ENCODE measurements at regions of chr3 and their contacts with region 1.

Region 1: GRCh38 chr3:138915503-138916498 is 31.1 kb downstream of the FOXL2 start:
- DNase-seq: peak; percentile 50 to 89 (median 83)
- ATAC-seq: peak; percentile 89
- H3K4me3 ChIP-seq: peak overlapping the region; percentile 74 to 99
- H3K4me3 Mint-ChIP-seq: peak overlapping the region; percentile 85
- H3K27ac ChIP-seq: peak overlapping the region; percentile 15 to 50
- H3K27ac Mint-ChIP-seq: peak overlapping the region; percentile 52
- H3K4me1 ChIP-seq: no peaks in the 10 kb centered on the region
- H3K4me1 Mint-ChIP-seq: peaks cover 5% of the 10 kb centered on the region
- H3K27me3 ChIP-seq: no peaks in the 10 kb centered on the region
- H3K27me3 Mint-ChIP-seq: peaks cover 7% of the 10 kb centered on the region
- CTCF ChIP-seq: peak; percentile 89

Region 2: GRCh38 chr3:138068579-138069174 is 847.1 kb before region 1 on chr3:
- CTCF ChIA-PET with region 1: no interaction called
- POLR2A ChIA-PET with region 1: no interaction called
- intact Hi-C with region 1: loop called in 1 of 2 experiments (anchors 2 kb)
- DNase-seq: peak; percentile 53 to 80 (median 68)
- ATAC-seq: peak; percentile 79
- H3K4me3 ChIP-seq: no peak overlapping the region
- H3K4me3 Mint-ChIP-seq: no peak overlapping the region
- H3K27ac ChIP-seq: no peak overlapping the region
- H3K27ac Mint-ChIP-seq: no peak overlapping the region
- H3K4me1 ChIP-seq: no peaks in the 10 kb centered on the region
- H3K4me1 Mint-ChIP-seq: no peaks in the 10 kb centered on the region
- H3K27me3 ChIP-seq: no peaks in the 10 kb centered on the region
- H3K27me3 Mint-ChIP-seq: peaks cover 9% of the 10 kb centered on the region
- CTCF ChIP-seq: peak; percentile 79

Region 3: GRCh38 chr3:138479438-138479863 is 436.4 kb before region 1 on chr3:
- CTCF ChIA-PET with region 1: interaction called, 3 read pairs
- POLR2A ChIA-PET with region 1: no interaction called
- intact Hi-C with region 1: loop called (anchors 2 to 5 kb)
- DNase-seq: peak in 1 of 9 experiments; percentile 43
- ATAC-seq: no peak
- H3K4me3 ChIP-seq: no peak overlapping the region
- H3K4me3 Mint-ChIP-seq: no peak overlapping the region
- H3K27ac ChIP-seq: no peak overlapping the region
- H3K27ac Mint-ChIP-seq: no peak overlapping the region
- H3K4me1 ChIP-seq: no peaks in the 10 kb centered on the region
- H3K4me1 Mint-ChIP-seq: no peaks in the 10 kb centered on the region
- H3K27me3 ChIP-seq: no peaks in the 10 kb centered on the region
- H3K27me3 Mint-ChIP-seq: peaks cover 5% of the 10 kb centered on the region
- CTCF ChIP-seq: peak; percentile 20

Region 4: DNA sequence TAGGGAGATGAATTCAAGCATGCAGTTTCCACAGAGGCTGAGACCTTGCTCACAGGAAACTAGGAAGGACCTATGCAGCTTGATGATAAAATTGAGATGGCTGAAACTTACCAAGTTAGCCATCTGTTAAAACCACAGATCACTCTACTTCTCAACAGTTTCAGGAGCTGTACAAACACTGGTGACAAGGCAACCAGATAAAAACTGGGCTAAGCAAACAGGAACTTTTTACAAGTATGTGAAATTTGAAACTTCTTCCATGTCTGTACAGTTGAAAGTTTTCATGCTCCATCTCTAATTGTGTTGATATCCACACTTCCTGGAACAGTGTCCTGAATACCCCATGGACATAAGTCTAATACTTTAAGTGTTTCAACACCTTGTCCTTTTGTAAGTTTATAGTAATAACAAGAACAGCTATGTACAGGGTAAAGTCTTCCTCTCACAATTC is 229.0 kb before region 1 on chr3:
- CTCF ChIA-PET with region 1: interaction called, 326 read pairs
- POLR2A ChIA-PET with region 1: no interaction called
- intact Hi-C with region 1: no loop called
- DNase-seq: peak in 2 of 9 experiments; percentile 23 to 38
- ATAC-seq: no peak
- H3K4me3 ChIP-seq: no peak overlapping the region
- H3K4me3 Mint-ChIP-seq: no peak overlapping the region
- H3K27ac ChIP-seq: peak overlapping the region in 1 of 2 experiments; percentile 17
- H3K27ac Mint-ChIP-seq: peak overlapping the region; percentile 16
- H3K4me1 ChIP-seq: no peaks in the 10 kb centered on the region
- H3K4me1 Mint-ChIP-seq: peaks cover 2% of the 10 kb centered on the region
- H3K27me3 ChIP-seq: no peaks in the 10 kb centered on the region
- H3K27me3 Mint-ChIP-seq: no peaks in the 10 kb centered on the region
- CTCF ChIP-seq: no peak

Region 5: GRCh38 chr3:138717348-138717747 is 198.5 kb before region 1 on chr3:
- CTCF ChIA-PET with region 1: interaction called, 15 read pairs
- POLR2A ChIA-PET with region 1: no interaction called
- intact Hi-C with region 1: no loop called
- DNase-seq: no peak
- ATAC-seq: no peak
- H3K4me3 ChIP-seq: no peak overlapping the region
- H3K4me3 Mint-ChIP-seq: no peak overlapping the region
- H3K27ac ChIP-seq: no peak overlapping the region
- H3K27ac Mint-ChIP-seq: no peak overlapping the region
- H3K4me1 ChIP-seq: no peaks in the 10 kb centered on the region
- H3K4me1 Mint-ChIP-seq: peaks cover 2% of the 10 kb centered on the region
- H3K27me3 ChIP-seq: no peaks in the 10 kb centered on the region
- H3K27me3 Mint-ChIP-seq: no peaks in the 10 kb centered on the region
- CTCF ChIP-seq: no peak

Region 6: GRCh38 chr3:138781012-138781470 is 134.8 kb before region 1 on chr3:
- CTCF ChIA-PET with region 1: interaction called, 12 read pairs
- POLR2A ChIA-PET with region 1: interaction called, 4 read pairs
- intact Hi-C with region 1: loop called in 1 of 2 experiments (anchors 10 kb)
- DNase-seq: peak; percentile 29 to 89 (median 55)
- ATAC-seq: peak; percentile 97
- H3K4me3 ChIP-seq: no peak overlapping the region
- H3K4me3 Mint-ChIP-seq: peak overlapping the region; percentile 54
- H3K27ac ChIP-seq: peak overlapping the region; percentile 39 to 66
- H3K27ac Mint-ChIP-seq: peak overlapping the region; percentile 92
- H3K4me1 ChIP-seq: peaks cover 11% of the 10 kb centered on the region
- H3K4me1 Mint-ChIP-seq: peaks cover 29% of the 10 kb centered on the region
- H3K27me3 ChIP-seq: no peaks in the 10 kb centered on the region
- H3K27me3 Mint-ChIP-seq: no peaks in the 10 kb centered on the region
- CTCF ChIP-seq: no peak

Region 7: DNA sequence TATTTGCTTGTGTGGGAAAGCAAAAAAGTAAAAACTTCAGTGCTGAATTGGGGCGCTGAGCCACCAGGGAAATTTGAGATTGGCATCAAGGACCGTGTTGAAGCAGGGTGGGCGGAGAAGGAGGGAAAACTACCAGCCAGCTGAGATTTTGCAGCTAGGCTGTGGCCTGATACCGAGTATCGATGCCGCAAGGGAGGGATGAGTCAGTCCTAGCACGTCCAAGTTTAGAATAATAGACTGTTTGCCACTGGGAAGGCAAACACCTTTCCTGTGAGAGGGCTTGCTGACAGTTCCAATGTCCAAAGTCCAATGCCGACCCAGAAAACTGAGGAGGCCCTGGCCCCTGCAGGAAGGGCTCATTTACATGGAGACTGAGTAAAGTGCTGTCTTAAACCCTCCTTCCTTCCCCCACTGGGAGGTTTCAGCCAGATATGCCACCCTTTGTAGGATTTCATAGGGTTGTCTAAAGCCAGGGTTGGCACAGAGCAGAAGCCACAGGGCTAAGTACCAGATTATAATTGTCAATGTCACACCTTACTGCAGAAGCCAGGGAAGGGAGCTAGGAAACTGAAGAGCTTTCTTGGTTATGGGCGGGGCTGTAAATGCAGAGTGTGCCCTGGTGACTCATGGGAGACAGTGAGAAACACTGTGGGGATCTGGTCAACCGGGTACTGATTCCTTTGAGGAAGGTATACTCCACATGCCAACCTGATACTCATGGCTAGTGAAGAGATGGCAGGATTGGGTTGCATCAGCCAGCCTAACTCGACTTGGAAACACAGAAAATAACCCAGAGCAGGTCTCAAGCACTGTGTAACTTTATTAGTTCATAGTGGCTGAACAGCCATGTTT is 52.7 kb before region 1 on chr3:
- CTCF ChIA-PET with region 1: interaction called, 10 read pairs
- POLR2A ChIA-PET with region 1: no interaction called
- intact Hi-C with region 1: no loop called
- DNase-seq: peak in 1 of 9 experiments; percentile 15
- ATAC-seq: no peak
- H3K4me3 ChIP-seq: no peak overlapping the region
- H3K4me3 Mint-ChIP-seq: no peak overlapping the region
- H3K27ac ChIP-seq: no peak overlapping the region
- H3K27ac Mint-ChIP-seq: no peak overlapping the region
- H3K4me1 ChIP-seq: no peaks in the 10 kb centered on the region
- H3K4me1 Mint-ChIP-seq: no peaks in the 10 kb centered on the region
- H3K27me3 ChIP-seq: no peaks in the 10 kb centered on the region
- H3K27me3 Mint-ChIP-seq: no peaks in the 10 kb centered on the region
- CTCF ChIP-seq: no peak